Heart right ventricle (tissue), 16 donors: ENCODE measurements at regions of chr18 and their contacts with region 1.

Region 1: GRCh38 chr18:50878345-50879301 is at the start of gene ME2:
- DNase-seq: peak; percentile 91 to 93
- ATAC-seq: peak; percentile 98 to 100 (median 99)
- H3K4me3 ChIP-seq: peak within 1 kb of the TSS; percentile 70 to 98 (median 87)
- H3K27ac ChIP-seq: peak within 1 kb of the TSS; percentile 83 to 100 (median 95)
- H3K4me1 ChIP-seq: peaks cover 0 to 38% (median 17%) of the 10 kb centered on the region in 9 donors
- H3K27me3 ChIP-seq: no peaks in the 10 kb centered on the region
- CTCF ChIP-seq: no peak
- total RNA-seq, gene ME2: 62.1 to 104 (median 75.9) TPM

Region 2: DNA sequence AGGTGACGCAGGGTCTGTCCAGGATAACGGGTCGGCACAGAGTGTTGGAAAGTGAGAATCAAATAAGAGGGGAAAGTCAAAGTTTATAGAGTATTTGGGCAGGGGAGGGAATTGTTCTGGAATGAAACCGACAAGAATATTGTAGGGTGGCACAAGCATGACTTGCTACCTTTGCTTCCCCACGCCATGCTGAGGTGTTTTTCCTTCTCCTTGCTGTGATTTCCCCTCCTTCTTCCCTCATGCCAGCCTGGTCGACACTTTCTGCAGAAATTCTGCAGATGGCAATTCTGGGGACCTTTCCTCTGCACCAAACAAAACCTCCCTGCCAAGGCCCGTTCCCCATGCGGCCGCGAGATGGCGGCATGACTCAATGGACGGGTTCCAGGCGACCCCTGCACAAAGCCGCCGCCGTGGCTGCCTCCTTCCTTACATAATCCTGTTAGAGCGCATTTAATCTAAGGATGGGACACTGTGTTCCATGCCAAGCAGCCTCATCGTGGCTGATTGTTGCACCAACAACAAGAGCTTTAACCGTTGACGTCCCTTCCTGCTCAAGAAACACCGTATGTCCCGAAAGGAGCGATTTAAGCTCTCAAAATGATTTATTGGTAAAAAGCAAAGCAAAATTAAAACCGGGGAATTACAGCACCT is 58.8 kb before region 1 on chr18 and contains the start of gene MRO:
- intact Hi-C with region 1: loop called in 1 of 10 experiments (anchors 5 kb)
- DNase-seq: peak; percentile 78 to 85
- ATAC-seq: peak; percentile 91 to 98 (median 96)
- H3K4me3 ChIP-seq: peak within 1 kb of the TSS in 9 of 10 donors; percentile 11 to 52 (median 40)
- H3K27ac ChIP-seq: peak within 1 kb of the TSS; percentile 1 to 74 (median 43)
- H3K4me1 ChIP-seq: peaks cover 0 to 24% (median 15%) of the 10 kb centered on the region in 9 donors
- H3K27me3 ChIP-seq: no peaks in the 10 kb centered on the region
- CTCF ChIP-seq: peak; percentile 77 to 97 (median 93)
- total RNA-seq, gene MRO: 1.0 to 4.3 (median 2.3) TPM

Region 3: DNA sequence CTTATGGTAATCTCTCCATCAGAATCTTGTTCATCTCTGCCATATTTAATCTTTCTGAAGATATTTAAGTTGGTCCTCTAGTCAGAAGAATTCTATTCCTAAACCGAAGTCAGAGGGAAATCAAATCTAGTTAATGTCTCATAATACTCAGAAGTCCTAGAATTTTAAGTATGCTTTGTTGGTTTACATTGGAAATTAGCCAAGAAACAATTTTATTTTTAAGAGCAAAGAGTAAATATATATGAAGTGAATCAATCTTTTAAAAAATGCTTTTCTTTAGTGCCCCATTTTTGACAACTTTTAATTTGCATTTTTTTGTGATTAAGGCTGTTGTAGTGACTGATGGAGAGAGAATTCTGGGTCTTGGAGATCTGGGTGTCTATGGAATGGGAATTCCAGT is 38.4 kb after region 1 on chr18:
- intact Hi-C with region 1: loop called in 1 of 10 experiments (anchors 5 kb)
- DNase-seq: no peak
- ATAC-seq: no peak
- H3K4me3 ChIP-seq: no peak overlapping the region
- H3K27ac ChIP-seq: no peak overlapping the region
- H3K4me1 ChIP-seq: no peaks in the 10 kb centered on the region
- H3K27me3 ChIP-seq: no peaks in the 10 kb centered on the region
- CTCF ChIP-seq: no peak

Region 4: DNA sequence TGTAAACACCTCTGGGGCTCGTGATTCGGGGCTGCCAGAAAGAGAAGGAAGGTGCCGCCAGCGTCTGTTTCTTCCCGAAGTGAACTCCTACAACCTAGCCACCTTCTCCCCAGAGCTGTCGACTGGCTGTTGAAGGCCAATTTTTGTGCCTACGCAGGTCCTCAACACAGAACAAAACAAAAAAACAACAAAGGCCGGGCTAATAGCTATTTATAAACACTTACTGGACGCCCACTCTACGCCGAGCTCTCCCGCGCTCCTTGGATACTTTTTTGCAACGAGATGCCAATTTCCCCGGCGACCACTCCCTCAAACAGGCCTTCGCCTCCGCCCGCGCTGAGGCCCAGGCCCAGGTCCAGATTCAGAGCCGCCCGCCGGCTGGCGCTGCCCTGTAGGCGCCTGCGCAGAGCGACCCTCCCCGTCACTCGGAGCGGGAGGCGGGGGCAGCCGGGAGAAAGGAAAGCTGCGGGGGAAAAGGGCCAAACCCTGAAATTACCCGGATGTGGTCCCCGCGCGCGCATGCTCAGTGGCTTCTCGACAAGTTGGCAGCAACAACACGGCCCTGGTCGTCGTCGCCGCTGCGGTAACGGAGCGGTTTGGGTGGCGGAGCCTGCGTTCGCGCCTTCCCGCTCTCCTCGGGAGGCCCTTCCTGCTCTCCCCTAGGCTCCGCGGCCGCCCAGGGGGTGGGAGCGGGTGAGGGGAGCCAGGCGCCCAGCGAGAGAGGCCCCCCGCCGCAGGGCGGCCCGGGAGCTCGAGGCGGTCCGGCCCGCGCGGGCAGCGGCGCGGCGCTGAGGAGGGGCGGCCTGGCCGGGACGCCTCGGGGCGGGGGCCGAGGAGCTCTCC is 151.3 kb after region 1 on chr18 and contains the start of gene SMAD4:
- intact Hi-C with region 1: loop called in 3 of 10 experiments (anchors 2 to 10 kb)
- DNase-seq: peak; percentile 97 to 98
- ATAC-seq: peak; percentile 95 to 99 (median 97)
- H3K4me3 ChIP-seq: peak within 1 kb of the TSS; percentile 70 to 94 (median 81)
- H3K27ac ChIP-seq: peak within 1 kb of the TSS; percentile 94 to 100 (median 98)
- H3K4me1 ChIP-seq: peaks cover 2 to 85% (median 54%) of the 10 kb centered on the region in 9 donors
- H3K27me3 ChIP-seq: no peaks in the 10 kb centered on the region
- CTCF ChIP-seq: no peak
- total RNA-seq, gene SMAD4: 78.4 to 110 (median 86.9) TPM

Region 5: DNA sequence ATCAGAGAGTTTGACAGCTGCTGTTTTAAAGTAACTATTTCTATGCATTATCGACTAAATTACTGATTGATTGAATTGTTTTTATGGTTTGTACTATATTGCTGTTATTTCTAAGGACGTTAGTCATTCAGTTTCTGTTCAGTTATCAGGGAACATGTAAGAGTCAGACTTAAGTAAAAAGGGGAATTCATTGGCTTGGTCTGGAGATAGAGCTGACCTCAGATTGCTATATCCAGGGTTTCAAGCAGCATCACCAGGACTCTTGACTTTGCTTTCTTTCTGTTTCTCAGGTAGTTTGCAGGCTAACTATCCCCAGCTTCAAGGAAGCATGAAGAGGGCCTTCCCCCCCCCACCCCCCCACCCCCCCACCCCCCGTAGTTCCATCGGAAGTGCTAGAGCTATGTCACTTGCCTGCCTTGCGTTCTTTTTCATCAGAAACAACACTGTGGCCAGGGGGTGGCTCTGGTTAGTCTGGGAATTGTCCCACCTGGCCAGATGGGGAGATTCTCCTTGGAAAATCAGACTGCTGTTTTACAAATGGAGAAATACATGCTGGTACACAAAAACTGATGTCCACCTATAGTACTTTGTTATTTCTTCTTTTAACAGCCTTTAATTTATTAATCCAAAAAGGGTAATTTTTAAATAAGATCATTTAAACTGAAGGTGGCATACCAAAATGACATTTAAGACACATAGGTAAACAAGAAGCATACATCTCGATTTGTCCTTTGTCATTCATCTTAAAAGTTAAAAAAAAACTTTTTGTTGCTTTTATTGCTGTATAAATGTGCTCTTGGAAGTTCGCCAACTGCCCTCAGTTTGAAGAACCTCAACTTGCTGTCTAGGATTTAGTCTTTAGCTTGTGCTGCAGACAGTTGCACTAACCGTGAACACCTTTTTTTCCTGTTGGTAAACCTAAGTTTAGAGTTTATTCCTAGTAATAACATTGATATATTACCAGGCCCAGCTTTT is 160.8 kb after region 1 on chr18:
- intact Hi-C with region 1: loop called in 3 of 10 experiments (anchors 5 to 10 kb)
- DNase-seq: no peak
- ATAC-seq: no peak
- H3K4me3 ChIP-seq: no peak overlapping the region
- H3K27ac ChIP-seq: no peak overlapping the region
- H3K4me1 ChIP-seq: peaks cover 10 to 99% (median 94%) of the 10 kb centered on the region in 9 donors
- H3K27me3 ChIP-seq: no peaks in the 10 kb centered on the region
- CTCF ChIP-seq: no peak